ENCODE measurements at regions of chr18 and their contacts with region 1.

Region 1: GRCh38 chr18:47748847-47749599 is 181.4 kb downstream of the SMAD2 start:
- DNase-seq: peak; percentile 73
- H3K4me3 ChIP-seq: peak overlapping the region in 1 of 3 experiments; percentile 46
- H3K27ac ChIP-seq: no peak overlapping the region
- H3K4me1 ChIP-seq: no peaks in the 10 kb centered on the region
- H3K27me3 ChIP-seq: no peaks in the 10 kb centered on the region
- CTCF ChIP-seq: peak; percentile 94 to 100
- POLR2A ChIP-seq: no peak

Region 2: DNA sequence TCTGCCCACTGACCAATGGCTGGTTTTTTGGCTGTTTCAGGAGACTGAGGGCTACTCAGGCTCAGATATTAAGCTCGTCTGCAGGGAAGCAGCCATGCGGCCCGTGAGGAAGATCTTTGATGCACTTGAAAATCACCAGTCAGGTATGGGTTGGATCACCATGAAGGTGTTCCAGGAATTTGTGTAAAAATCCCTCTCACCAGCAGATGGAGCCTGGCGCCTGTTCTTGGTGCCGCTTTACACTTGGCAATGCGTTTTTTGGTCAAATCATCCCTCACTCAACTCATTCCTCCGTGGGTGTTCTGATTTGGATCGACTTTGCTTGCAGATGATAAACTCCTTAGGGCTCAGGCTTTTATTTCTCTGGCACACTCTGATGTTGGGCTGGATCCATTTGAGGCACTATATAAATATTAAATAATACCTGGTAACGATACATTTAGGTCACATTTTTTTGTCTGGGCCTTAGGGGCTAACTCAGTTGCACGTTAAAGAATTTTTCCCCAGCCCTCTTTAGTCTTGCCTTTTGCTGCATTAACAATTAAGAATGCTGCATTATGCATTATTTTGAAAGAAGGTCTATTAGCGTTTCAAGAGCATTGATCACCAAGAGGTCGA is 648.7 kb before region 1 on chr18:
- CTCF ChIA-PET with region 1: interaction called, 18 read pairs
- POLR2A ChIA-PET with region 1: no interaction called
- dilution Hi-C with region 1: no loop called
- intact Hi-C with region 1: loop called (anchors 1 kb)
- DNase-seq: peak; percentile 56
- H3K4me3 ChIP-seq: no peak overlapping the region
- H3K27ac ChIP-seq: no peak overlapping the region
- H3K4me1 ChIP-seq: no peaks in the 10 kb centered on the region
- H3K27me3 ChIP-seq: no peaks in the 10 kb centered on the region
- CTCF ChIP-seq: peak; percentile 70 to 78
- POLR2A ChIP-seq: no peak

Region 3: GRCh38 chr18:47247036-47247832 is 501.8 kb before region 1 on chr18:
- CTCF ChIA-PET with region 1: interaction called, 3 read pairs
- POLR2A ChIA-PET with region 1: no interaction called
- dilution Hi-C with region 1: no loop called
- intact Hi-C with region 1: loop called (anchors 10 kb)
- DNase-seq: no peak
- H3K4me3 ChIP-seq: no peak overlapping the region
- H3K27ac ChIP-seq: no peak overlapping the region
- H3K4me1 ChIP-seq: no peaks in the 10 kb centered on the region
- H3K27me3 ChIP-seq: peaks cover 60 to 87% of the 10 kb centered on the region in 2 experiments
- CTCF ChIP-seq: peak; percentile 38 to 44
- POLR2A ChIP-seq: no peak

Region 4: GRCh38 chr18:47595815-47596496 is 153.1 kb before region 1 on chr18:
- CTCF ChIA-PET with region 1: interaction called, 10 read pairs
- POLR2A ChIA-PET with region 1: no interaction called
- dilution Hi-C with region 1: no loop called
- intact Hi-C with region 1: loop called (anchors 1 kb)
- DNase-seq: peak; percentile 1
- H3K4me3 ChIP-seq: no peak overlapping the region
- H3K27ac ChIP-seq: no peak overlapping the region
- H3K4me1 ChIP-seq: no peaks in the 10 kb centered on the region
- H3K27me3 ChIP-seq: peaks cover 0 to 2% of the 10 kb centered on the region in 2 experiments
- CTCF ChIP-seq: peak; percentile 27 to 38
- POLR2A ChIP-seq: no peak

Measured in endothelial cell of umbilical vein (primary cell).